ENCODE measurements at regions of chr1 and their contacts with region 1.

Region 1: DNA sequence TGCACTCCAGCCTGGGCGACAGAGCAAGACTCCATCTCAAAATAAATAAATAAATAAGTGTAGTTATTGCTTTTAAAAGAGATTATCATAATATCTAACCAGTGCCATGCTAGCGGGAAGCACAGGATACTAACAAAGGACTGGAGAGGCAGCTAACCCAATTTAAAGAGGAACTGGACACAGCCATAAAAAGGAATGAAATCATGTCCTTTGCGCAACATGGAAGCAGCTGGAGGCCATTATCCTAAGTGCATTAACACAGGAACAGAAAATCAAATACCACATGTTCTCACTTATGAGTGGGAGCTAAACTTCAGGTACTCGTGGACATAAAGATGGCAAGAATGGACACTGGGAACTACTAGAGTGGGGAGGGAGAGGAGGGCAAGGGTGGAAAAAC is 54.9 kb downstream of the TM2D1 start:
- DNase-seq: no peak
- ATAC-seq: no peak
- H3K4me3 Mint-ChIP-seq: no peak overlapping the region
- H3K27ac Mint-ChIP-seq: no peak overlapping the region
- H3K4me1 Mint-ChIP-seq: no peaks in the 10 kb centered on the region
- H3K27me3 Mint-ChIP-seq: no peaks in the 10 kb centered on the region
- CTCF ChIP-seq: no peak

Region 2: GRCh38 chr1:61606448-61607312 is 63.3 kb before region 1 on chr1:
- CTCF ChIA-PET with region 1: no interaction called
- POLR2A ChIA-PET with region 1: no interaction called
- DNase-seq: no peak
- ATAC-seq: peak; percentile 26; the same call in 1 of the 2 replicates
- H3K4me3 Mint-ChIP-seq: no peak overlapping the region
- H3K27ac Mint-ChIP-seq: no peak overlapping the region
- H3K4me1 Mint-ChIP-seq: peaks cover 10% of the 10 kb centered on the region
- H3K27me3 Mint-ChIP-seq: no peaks in the 10 kb centered on the region
- CTCF ChIP-seq: no peak

Region 3: GRCh38 chr1:61692155-61692800 is 22.3 kb after region 1 on chr1:
- CTCF ChIA-PET with region 1: no interaction called
- POLR2A ChIA-PET with region 1: no interaction called
- DNase-seq: no peak
- ATAC-seq: no peak
- H3K4me3 Mint-ChIP-seq: no peak overlapping the region
- H3K27ac Mint-ChIP-seq: no peak overlapping the region
- H3K4me1 Mint-ChIP-seq: no peaks in the 10 kb centered on the region
- H3K27me3 Mint-ChIP-seq: no peaks in the 10 kb centered on the region
- CTCF ChIP-seq: no peak

Region 4: GRCh38 chr1:61851849-61852669 is 182.0 kb after region 1 on chr1:
- CTCF ChIA-PET with region 1: interaction called, 3 read pairs
- POLR2A ChIA-PET with region 1: interaction called, 10 read pairs
- DNase-seq: no peak
- ATAC-seq: peak; percentile 65
- H3K4me3 Mint-ChIP-seq: no peak overlapping the region
- H3K27ac Mint-ChIP-seq: peak overlapping the region; percentile 71
- H3K4me1 Mint-ChIP-seq: peaks cover 29% of the 10 kb centered on the region
- H3K27me3 Mint-ChIP-seq: no peaks in the 10 kb centered on the region
- CTCF ChIP-seq: peak; percentile 48

Measured in WTC11 (cell line).